ENCODE measurements at regions of chr14 and their contacts with region 1.

Region 1: GRCh38 chr14:104137297-104138097 is 890 bp upstream of the KIF26A start:
- DNase-seq: peak in 8 of 10 donors; percentile 27 to 83 (median 54)
- H3K4me3 ChIP-seq: peak overlapping the region; percentile 24 to 72 (median 57)
- H3K27ac ChIP-seq: peak overlapping the region in 5 of 59 donors; percentile 11 to 57 (median 25)
- H3K27me3 ChIP-seq: peaks cover 0 to 68% (median 47%) of the 10 kb centered on the region in 45 donors
- CTCF ChIP-seq: peak; percentile 21 to 97 (median 91)

Region 2: GRCh38 chr14:103657471-103657870 is 480.0 kb before region 1 on chr14:
- intact Hi-C with region 1: no loop called
- DNase-seq: peak in 5 of 10 donors; percentile 27 to 67 (median 41)
- H3K4me3 ChIP-seq: no peak overlapping the region
- H3K27ac ChIP-seq: peak overlapping the region in 40 of 59 donors; percentile 0 to 89 (median 50)
- H3K27me3 ChIP-seq: no peaks in the 10 kb centered on the region
- CTCF ChIP-seq: no peak

Region 3: DNA sequence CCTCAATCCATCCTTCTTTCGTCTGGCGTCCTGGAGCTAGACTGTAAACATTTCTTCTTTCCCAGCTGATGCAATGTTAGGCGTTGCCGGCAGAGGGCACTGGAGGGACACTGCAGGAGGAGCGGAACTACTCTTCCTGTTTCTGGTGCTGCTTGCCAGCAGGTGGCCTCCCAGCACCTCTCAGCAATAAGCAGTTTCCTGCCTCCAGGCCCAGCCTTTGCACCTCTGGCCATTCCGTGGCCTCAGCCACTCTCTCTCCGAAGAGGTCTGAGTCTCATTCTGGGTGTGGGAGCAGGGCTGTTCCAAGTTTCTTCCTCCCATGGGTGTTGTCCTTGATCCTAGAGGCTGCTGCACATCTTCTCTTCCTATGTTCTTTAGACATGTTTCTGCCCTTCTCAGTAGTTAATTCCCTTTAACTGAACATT is 59.5 kb before region 1 on chr14:
- intact Hi-C with region 1: loop called in 1 of 2 experiments (anchors 5 kb)
- DNase-seq: peak; percentile 73 to 92 (median 86)
- H3K4me3 ChIP-seq: peak overlapping the region in 2 of 59 donors; percentile 20 to 30
- H3K27ac ChIP-seq: no peak overlapping the region
- H3K27me3 ChIP-seq: peaks cover 0 to 9% (median 0%) of the 10 kb centered on the region in 45 donors
- CTCF ChIP-seq: peak; percentile 81 to 100 (median 99)

Region 4: DNA sequence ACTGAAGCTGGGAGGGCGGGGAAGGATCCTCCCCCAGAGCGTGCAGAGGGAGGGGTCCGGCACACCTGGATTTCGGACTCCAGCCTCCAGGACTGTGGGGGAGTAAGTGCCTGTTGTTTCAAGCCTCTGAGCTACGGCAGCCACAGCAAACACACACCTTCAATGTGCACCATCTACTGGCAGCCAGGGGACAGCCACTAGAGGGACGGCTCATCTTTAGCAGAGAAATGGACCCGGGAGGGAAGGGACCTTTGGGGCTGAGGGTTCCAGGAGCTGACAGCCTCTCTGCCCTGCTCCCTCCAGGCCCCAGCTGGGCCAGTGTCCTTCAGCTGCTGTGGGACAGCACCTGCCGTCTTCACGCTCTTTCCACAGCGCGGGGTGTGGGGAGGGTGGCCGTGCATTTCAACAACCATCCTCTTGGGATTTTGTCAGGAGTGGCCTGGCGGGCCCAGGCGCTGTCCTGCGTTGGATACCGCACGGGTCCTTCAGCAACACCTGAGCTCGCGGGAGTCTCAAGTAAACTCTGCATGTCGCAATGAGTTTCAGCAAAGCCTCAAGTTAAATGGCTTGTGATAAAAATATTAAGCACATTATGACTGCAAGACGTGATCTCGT is 232.9 kb after region 1 on chr14:
- intact Hi-C with region 1: loop called (anchors 5 to 10 kb)
- DNase-seq: peak in 4 of 10 donors; percentile 23 to 57 (median 37)
- H3K4me3 ChIP-seq: no peak overlapping the region
- H3K27ac ChIP-seq: no peak overlapping the region
- H3K27me3 ChIP-seq: peaks cover 0 to 21% (median 0%) of the 10 kb centered on the region in 45 donors
- CTCF ChIP-seq: peak in 53 of 56 donors; percentile 27 to 70 (median 51)

Region 5: DNA sequence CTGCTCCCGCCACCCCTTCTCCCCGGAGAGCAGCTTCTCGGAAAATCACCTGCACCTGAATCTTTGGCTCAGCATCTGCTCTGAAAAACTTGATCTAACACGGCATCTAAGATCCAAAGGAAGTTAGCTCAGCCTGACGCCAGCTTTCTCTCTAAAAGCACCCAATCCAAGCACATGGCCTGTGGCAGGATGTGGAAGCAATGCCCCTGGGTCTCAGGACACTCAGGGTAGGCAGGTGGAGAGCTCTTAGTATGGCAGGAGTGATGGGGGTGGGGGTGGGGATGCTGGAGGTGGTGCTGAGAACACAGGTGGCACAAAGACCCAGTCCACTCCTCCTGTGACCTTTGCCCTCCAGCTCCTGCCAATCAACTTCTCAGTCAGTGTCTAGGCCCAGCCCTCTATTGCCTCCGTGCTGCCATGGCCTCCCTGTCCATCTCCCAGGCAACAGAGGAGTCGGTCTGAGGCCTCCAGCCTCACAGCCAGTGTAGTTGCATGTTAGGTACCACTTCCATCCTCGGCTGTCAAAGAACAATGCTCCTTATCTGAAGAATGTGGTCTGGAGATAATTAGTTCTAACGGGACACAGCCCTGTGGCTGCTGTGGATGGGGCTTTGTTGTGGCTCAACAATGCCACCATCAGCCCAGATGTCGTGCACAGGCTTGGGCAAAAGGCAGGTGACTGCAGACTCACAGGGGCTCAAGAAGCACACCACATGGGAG is 262.1 kb after region 1 on chr14:
- intact Hi-C with region 1: no loop called
- DNase-seq: no peak
- H3K4me3 ChIP-seq: no peak overlapping the region
- H3K27ac ChIP-seq: no peak overlapping the region
- H3K27me3 ChIP-seq: peaks cover 0 to 17% (median 0%) of the 10 kb centered on the region in 45 donors
- CTCF ChIP-seq: no peak

Region 6: GRCh38 chr14:104563742-104564615 is 426.5 kb after region 1 on chr14:
- intact Hi-C with region 1: loop called (anchors 1 to 5 kb)
- DNase-seq: peak; percentile 57 to 85 (median 69)
- H3K4me3 ChIP-seq: peak overlapping the region in 1 of 59 donors; percentile 15
- H3K27ac ChIP-seq: no peak overlapping the region
- H3K27me3 ChIP-seq: peaks cover 0 to 26% (median 0%) of the 10 kb centered on the region in 45 donors
- CTCF ChIP-seq: peak; percentile 53 to 95 (median 87)

Region 7: DNA sequence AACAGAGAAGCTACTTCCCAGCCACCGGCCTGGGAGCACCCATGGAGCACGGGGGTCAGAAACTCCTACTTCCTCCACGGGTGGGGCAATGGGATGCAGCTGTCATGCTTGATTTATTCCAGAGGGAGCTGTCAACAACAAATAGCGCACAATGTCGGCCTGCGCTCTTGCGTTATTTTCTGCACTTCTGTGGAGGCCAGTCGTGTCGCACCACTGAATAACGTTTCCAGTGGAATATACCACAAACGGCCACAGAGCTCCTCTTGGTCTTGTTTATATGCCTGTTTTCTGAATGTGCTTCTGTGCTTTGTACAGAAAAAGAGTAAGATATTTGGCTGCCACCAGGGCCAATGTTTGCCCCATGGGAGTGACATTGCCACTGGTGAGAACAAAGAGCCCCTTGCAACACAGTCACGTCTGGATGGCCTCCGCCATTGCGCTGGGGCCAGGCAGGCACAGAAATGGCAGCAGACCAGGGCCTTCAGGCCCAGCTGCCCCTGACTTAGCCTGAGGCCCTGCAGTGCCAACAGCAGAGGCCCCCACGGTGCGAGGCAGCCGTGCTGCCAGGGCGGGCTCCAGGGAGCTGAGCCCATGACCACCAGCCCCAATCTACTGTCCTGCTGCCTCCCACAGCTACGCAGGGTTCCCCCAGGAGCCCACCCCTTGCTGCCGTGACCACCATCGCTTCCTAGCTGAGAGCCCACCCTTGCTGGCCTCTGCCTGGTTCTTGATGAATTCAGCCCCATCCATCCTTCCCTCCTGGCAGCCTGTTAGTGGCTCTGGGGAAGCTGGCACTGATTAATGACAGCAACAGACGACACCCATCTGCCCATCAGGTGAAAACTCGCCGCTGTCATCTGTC is 496.0 kb after region 1 on chr14:
- intact Hi-C with region 1: loop called (anchors 2 to 5 kb)
- DNase-seq: peak in 8 of 10 donors; percentile 44 to 80 (median 70)
- H3K4me3 ChIP-seq: peak overlapping the region in 1 of 59 donors; percentile 12
- H3K27ac ChIP-seq: peak overlapping the region; percentile 40 to 98 (median 92)
- H3K27me3 ChIP-seq: no peaks in the 10 kb centered on the region
- CTCF ChIP-seq: peak in 18 of 56 donors; percentile 8 to 53 (median 22)

Region 8: DNA sequence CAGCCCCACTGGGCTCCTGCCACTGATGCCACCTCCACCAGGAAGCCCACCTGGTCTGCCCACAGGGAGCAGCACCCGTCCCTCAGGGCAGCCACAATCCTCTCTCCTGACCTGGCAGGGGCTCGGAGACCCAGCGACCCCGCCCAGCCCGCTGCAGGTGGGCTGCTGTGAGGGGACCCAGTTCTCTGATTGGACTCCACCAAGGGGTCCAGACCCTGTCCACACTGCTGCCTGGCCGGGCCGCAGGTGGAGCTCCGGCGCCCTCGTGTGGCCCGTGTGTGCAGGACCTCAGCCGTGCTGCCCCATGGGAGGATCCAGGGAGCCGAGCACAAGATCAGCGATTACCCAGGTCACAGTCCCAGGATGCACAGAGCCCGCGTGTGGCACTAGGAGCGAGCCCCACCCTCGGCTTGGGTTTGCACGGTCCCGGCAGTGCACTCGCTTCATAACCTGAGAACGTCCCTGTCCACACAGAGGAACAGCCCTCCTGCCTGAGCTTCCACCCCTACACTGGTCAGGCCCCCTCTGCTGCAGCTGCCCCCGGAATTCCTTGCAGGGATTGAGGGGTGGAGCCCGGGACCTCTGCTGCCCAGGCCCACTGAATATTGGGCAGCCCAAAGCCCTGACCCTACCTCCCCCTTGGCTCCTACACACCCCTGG is 502.5 kb after region 1 on chr14:
- intact Hi-C with region 1: loop called in 1 of 2 experiments (anchors 2 kb)
- DNase-seq: peak in 9 of 10 donors; percentile 37 to 87 (median 63)
- H3K4me3 ChIP-seq: peak overlapping the region in 1 of 59 donors; percentile 23
- H3K27ac ChIP-seq: no peak overlapping the region
- H3K27me3 ChIP-seq: peaks cover 0 to 5% (median 0%) of the 10 kb centered on the region in 45 donors
- CTCF ChIP-seq: peak; percentile 61 to 98 (median 92)

Measured in dorsolateral prefrontal cortex (tissue), 120 donors.